BJ (cell line): ENCODE measurements at regions of chr11 and their contacts with region 1.

Region 1: DNA sequence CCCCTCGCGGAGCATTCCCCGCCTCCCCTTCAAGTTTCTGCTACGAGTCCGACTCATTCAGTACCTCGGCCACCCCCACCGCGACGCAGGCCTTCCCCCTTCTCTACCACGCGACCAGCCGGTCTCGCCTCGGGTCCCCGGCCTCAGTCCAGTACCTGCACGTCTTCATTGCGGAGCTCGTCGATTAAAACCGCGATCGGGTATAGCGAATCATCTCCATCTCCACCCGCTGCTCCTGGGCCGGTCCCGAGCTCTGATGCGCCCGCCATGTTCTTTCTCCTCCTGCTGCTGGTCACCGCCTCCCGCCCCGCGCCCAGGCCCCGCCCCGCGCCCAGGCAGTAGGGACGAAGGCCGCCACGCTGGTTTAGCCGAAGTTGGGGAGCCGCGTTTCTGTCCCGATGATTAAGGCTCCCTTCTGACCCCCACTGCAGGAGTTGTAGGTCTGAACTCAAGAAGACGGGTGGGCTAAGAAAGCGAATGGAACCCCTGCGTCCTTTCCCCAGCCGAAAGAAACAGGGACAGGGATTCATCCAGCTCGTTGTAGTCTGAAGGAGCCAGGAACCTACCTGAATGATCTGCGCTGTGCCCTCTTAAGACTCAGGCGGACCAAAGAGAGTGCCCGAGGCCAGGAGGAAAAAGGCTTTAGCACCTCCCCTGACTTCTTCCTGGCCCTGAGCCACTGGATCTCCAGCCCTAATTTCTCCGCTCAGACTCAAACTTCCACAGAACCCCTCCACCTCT is at the start of gene PPP2R1B:
- DNase-seq: no peak
- H3K4me3 ChIP-seq: peak within 1 kb of the TSS; percentile 81
- H3K27me3 ChIP-seq: no peaks in the 10 kb centered on the region
- CTCF ChIP-seq: no peak
- polyA plus RNA-seq, gene PPP2R1B: 20.7 and 32.5 TPM in 2 replicates

Region 2: GRCh38 chr11:111707039-111707690 is 59.1 kb before region 1 on chr11:
- CTCF ChIA-PET with region 1: no interaction called
- POLR2A ChIA-PET with region 1: no interaction called
- DNase-seq: peak; percentile 65
- H3K4me3 ChIP-seq: no peak overlapping the region
- H3K27me3 ChIP-seq: no peaks in the 10 kb centered on the region
- CTCF ChIP-seq: no peak

Region 3: DNA sequence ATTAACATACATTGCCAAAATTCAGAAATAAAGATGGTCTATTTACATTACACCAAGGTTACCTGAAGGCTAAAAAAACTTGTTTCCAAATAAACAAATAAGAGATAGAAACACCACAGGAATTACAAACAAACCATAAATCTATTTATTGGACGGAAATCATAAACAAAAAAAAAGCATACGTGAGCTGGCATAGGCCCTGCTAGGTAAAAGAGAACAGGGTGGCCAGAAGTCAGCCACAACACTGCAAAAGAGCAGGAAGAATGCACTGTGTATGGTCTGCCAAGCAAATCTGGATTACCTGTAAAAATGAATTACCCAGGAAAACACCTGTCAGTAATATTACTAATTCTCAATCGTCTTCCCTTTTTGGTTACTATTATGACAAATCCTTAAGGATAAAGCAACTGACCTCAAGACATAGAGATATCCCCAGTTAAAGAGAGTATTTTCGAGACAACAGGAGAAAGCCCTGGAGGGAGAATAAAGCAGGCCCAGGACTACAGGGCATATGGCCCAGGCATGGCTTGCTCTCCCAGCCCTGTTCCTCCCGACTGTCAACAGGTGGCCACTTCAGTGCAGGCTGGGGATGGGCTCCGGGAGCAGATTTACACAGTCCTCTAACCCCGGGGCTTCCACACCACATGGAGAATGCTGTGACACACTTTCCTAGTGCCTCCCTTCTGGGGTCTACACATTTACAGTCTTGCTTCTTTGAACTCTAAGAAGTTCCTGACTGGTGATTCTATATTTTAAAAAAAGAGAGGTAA is 18.0 kb before region 1 on chr11:
- CTCF ChIA-PET with region 1: interaction called, 11 read pairs
- POLR2A ChIA-PET with region 1: interaction called, 4 read pairs
- DNase-seq: no peak
- H3K4me3 ChIP-seq: no peak overlapping the region
- H3K27me3 ChIP-seq: no peaks in the 10 kb centered on the region
- CTCF ChIP-seq: no peak

Region 4: DNA sequence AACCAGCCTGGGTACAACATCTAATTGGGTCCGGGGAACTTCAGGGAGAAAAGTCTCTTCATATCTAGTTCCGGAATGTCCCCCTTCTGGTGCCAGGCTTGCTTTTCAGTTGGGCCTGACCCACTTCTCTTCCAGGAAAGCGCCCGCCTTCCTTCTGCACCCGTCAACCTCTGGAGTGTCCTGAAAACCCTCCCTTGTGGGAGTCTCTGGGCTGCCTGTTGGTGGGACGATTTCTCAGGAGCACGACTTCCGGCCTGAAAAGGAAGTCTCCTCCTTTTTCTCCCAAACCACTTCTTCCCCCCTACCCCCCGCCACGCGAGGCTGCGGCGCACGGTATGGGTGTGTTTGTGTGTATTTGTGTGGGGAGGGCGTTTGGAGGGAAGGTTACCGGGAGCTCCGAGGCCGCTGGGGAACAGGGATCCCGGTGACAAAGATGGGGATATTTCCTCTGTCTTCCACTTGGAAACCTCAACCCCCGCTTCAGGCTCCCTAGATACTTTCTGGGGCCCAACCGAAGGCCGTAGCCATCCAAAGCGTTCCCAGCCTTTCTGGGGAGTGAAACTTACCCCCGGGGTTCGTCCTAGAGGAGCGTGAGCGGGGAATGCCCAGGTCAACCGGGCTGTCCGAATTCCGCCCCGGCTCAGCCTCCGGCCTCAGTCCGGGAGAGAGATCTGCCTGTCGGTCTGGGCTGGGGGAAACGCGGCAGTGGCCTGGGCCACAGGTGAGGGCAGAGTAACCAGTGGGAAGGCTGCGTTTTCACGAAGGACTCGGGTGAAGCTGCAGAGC is 308.0 kb after region 1 on chr11 and contains the start of gene NKAPD1:
- CTCF ChIA-PET with region 1: no interaction called
- POLR2A ChIA-PET with region 1: interaction called, 27 read pairs
- DNase-seq: peak; percentile 70
- H3K4me3 ChIP-seq: peak within 1 kb of the TSS; percentile 67
- H3K27me3 ChIP-seq: no peaks in the 10 kb centered on the region
- CTCF ChIP-seq: peak; percentile 15; the same call in 1 of the 2 replicates
- polyA plus RNA-seq, gene NKAPD1: 8.6 and 15.9 TPM in 2 replicates